ENCODE measurements at regions of chr19 and their contacts with region 1.

Region 1: DNA sequence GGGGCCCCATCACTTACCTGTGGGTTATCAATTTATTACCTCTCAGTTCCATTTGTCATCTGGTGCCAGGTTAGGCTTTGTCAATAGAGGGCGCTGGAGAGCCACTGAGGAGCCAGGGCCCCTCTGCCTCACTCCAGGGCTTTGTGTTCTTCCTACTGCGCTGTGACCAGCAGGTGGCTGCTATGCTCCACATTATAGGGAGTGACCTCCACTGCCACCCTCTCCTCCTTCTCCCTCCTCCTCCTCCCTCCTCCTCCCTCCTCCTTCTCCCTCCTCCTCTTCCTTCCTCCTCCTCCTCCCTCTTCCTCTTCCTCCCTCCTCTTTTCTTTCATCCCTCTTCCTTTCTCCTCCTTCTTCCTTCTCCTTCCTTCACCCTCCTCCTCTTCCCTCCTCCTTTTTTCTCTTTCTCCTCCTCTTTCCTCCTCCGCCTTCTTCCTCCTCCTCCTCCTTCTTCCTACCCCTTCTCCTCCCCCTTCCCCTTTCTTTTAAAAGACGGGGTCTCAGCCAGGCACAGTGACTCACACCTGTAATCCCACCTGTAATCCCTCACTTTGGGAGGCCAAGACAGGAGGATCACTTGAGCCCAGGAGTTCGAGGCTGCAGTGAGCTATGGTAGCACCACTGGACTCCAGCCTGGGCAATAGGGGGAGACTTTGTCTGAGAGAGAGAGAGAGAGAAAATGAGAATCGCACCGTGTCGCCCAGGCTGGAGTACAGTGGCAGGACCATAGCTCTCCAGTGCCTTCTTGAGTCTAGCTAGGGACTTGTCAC is 10.3 kb upstream of the ZBTB32 start:
- DNase-seq: peak; percentile 69 to 84
- H3K4me3 ChIP-seq: no peak overlapping the region
- H3K27ac ChIP-seq: no peak overlapping the region
- H3K4me1 ChIP-seq: peaks cover 13% of the 10 kb centered on the region
- H3K27me3 ChIP-seq: no peaks in the 10 kb centered on the region
- CTCF ChIP-seq: peak; percentile 91

Region 2: GRCh38 chr19:35509861-35510625 is 184.0 kb before region 1 on chr19:
- CTCF ChIA-PET with region 1: interaction called, 9 read pairs
- POLR2A ChIA-PET with region 1: interaction called, 5 read pairs
- intact Hi-C with region 1: loop called (anchors 5 kb)
- DNase-seq: peak; percentile 81 to 95
- H3K4me3 ChIP-seq: peak overlapping the region; percentile 77
- H3K27ac ChIP-seq: peak overlapping the region; percentile 90
- H3K4me1 ChIP-seq: peaks cover 24% of the 10 kb centered on the region
- H3K27me3 ChIP-seq: no peaks in the 10 kb centered on the region
- CTCF ChIP-seq: peak; percentile 97

Region 3: DNA sequence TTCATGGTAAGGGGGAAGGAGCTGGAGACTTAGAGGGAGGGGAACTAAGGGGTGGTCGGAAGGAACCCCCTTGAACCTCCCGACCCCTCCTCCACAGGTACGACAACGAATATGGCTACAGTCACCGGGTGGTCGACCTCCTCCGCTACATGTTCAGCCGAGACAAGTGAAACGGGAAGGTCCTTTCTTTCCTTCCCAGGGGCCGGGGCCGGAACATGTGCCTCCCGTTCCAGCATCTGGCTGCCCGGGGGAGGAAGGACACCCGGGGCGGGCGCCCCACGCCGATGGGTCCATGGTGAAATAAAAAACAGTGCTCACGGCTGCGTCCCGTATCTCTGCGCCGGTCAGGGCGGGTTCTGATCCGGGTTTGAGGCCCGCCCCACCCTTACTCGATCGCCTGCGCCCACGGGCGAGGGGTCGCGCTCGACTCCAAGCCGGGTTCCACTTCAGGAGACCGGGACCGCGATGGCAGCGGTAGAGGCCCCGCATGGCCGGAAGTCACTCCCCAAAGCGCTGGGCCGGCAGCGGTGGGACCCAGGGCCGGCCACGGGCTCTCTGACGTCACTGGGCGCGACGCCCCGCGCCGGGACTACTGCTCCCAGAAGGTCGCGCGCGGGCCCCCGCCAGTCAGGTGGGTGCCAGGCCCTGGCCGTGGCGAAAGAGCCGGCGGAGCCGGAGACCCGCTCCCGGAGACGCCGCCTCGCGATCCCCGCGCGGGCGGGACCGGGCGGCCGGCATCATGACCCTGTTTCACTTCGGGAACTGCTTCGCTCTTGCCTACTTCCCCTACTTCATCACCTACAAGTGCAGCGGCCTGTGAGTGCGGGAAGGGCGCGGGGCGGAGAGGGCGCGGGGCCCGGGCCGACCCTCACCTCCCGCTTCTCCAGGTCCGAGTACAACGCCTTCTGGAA is 148.8 kb before region 1 on chr19 and contains the start of gene TMEM147:
- CTCF ChIA-PET with region 1: no interaction called
- POLR2A ChIA-PET with region 1: interaction called, 19 read pairs
- intact Hi-C with region 1: no loop called
- DNase-seq: peak; percentile 66 to 90
- H3K4me3 ChIP-seq: peak within 1 kb of the TSS; percentile 100
- H3K27ac ChIP-seq: peak within 1 kb of the TSS; percentile 59
- H3K4me1 ChIP-seq: peaks cover 14% of the 10 kb centered on the region
- H3K27me3 ChIP-seq: no peaks in the 10 kb centered on the region
- CTCF ChIP-seq: no peak
- total RNA-seq, gene TMEM147: 82.6 and 95.9 TPM in 2 replicates

Region 4: DNA sequence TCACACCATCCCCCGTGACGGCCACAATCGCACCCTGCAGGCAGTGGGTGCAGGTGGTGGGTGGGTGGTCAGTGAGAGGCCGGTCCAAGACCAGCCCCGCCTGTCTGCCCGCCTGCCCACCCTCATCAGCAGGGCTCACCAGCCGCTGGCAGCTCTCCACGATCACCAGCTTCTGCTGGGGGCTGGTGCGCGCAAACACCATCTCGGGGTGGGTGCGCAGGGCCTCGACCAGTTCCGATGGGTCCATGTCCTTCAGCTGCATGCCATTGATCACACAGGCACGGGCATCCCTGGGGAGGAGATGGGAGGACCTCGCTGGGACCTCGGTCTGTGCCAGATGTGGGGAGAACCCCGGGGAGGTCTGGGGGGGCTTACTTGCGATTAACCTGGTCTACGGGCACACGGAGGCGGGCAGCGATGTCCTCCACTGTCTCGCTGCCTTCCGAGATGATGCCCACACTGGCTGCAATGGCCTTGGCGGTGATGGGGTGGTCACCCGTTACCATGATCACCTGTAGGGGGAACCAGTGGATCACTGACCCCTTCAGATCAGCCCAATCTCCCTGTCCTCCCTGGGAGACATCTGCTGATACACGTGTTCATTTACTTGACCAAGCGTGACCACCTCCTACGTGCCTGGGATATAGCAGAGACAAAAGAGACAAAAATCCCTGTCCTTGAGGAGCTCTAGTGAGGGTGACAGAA is 138.6 kb before region 1 on chr19:
- CTCF ChIA-PET with region 1: no interaction called
- POLR2A ChIA-PET with region 1: no interaction called
- intact Hi-C with region 1: loop called (anchors 1 kb)
- DNase-seq: peak in 1 of 2 experiments; percentile 48
- H3K4me3 ChIP-seq: no peak overlapping the region
- H3K27ac ChIP-seq: no peak overlapping the region
- H3K4me1 ChIP-seq: no peaks in the 10 kb centered on the region
- H3K27me3 ChIP-seq: peaks cover 9% of the 10 kb centered on the region
- CTCF ChIP-seq: peak; percentile 63

Region 5: DNA sequence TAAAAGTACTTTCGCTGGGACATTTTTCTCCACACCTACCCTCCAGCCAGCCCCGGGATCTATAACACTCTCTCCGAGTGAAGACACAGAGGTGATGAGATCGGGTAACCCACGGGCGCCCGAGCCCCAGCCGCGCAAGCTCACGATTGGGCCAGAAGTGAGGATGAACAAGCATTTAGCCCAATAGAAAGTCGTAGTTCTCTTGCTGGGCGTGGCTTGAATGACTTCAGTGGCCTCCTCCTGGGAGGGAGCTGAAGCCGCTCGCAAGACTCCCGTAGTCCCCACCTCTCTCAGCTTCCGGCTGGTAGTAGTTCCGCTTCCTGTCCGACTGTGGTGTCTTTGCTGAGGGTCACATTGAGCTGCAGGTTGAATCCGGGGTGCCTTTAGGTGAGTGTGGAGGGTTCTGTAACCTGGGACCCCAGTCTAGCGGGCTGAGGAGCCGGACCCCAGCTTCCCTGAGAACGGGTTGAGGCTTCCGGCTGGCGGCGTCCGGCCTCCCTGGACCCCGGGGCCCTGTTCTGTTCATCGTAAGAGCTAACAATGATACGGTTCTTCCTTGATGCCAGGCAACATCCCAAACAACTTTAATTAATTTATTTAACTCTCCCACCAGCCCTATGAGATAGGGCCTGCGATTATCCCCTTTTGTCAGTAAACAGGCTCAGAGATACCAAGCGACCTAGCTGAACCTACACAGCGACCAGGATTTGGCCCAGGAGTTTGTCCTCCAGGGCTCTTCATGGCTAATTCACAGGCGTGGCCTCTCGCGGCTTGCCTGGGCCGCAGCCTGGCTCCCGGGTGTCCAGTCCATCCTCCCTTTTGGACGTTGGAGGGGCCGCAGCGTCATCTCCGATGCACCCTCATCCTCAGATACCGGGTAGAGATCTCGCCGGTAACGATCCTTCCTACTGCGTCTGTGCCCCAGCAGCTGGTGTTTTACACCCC is 45.7 kb before region 1 on chr19 and contains the start of gene COX6B1:
- CTCF ChIA-PET with region 1: interaction called, 3 read pairs
- POLR2A ChIA-PET with region 1: no interaction called
- intact Hi-C with region 1: loop called (anchors 2 kb)
- DNase-seq: peak; percentile 91 to 96
- H3K4me3 ChIP-seq: peak within 1 kb of the TSS; percentile 78
- H3K27ac ChIP-seq: peak within 1 kb of the TSS; percentile 2; the same call in 1 of the 2 replicates
- H3K4me1 ChIP-seq: peaks cover 11% of the 10 kb centered on the region; the same call in 1 of the 2 replicates
- H3K27me3 ChIP-seq: no peaks in the 10 kb centered on the region
- CTCF ChIP-seq: no peak
- total RNA-seq, gene COX6B1: 441 and 489 TPM in 2 replicates

Region 6: GRCh38 chr19:35748106-35749020 is 54.3 kb after region 1 on chr19 and contains the start of gene LIN37:
- CTCF ChIA-PET with region 1: interaction called, 11 read pairs
- POLR2A ChIA-PET with region 1: no interaction called
- intact Hi-C with region 1: no loop called
- DNase-seq: peak; percentile 98 to 99
- H3K4me3 ChIP-seq: peak within 1 kb of the TSS; percentile 97
- H3K27ac ChIP-seq: no peak within 1 kb of the TSS
- H3K4me1 ChIP-seq: peaks cover 36% of the 10 kb centered on the region
- H3K27me3 ChIP-seq: no peaks in the 10 kb centered on the region
- CTCF ChIP-seq: no peak
- total RNA-seq, gene LIN37: 9.4 and 17.0 TPM in 2 replicates